B cell (primary cell): ENCODE measurements at regions of chr6 and their contacts with region 1.

Region 1: DNA sequence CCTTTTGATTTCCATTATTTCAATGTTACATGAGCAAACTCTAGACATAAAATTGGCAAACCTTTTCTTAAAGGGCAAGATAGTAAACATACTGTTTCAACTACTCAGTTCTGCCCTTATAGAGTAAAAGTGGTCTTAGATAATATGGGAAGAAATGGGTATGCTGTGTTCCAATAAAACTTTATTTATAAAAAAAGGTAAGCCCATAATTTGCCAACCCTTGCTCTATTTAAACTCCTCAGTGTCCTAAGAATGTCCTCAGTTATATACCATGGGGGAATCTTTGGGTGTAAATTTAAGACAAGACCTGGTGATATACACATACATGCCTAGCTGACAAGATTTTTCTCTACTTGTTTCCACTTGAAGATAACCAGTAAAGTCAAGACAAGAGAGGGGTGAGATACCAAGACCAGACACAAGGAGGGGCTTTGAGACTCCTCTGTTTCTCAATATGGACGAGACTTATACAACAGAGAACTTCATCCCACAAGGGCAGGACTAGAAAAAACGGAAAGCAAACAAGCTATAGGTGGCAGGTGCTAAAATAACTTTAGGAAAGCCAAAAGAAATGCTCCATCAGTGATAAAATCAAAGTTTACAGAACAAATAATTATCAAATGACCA is 10.5 kb downstream of the SNX3 start:
- DNase-seq: peak; percentile 46
- ATAC-seq: peak; percentile 36
- H3K4me3 ChIP-seq: no peak overlapping the region
- H3K4me3 Mint-ChIP-seq: peak overlapping the region; percentile 12
- H3K27ac ChIP-seq: no peak overlapping the region
- H3K27ac Mint-ChIP-seq: no peak overlapping the region
- H3K4me1 ChIP-seq: peaks cover 40 to 53% of the 10 kb centered on the region in 2 donors
- H3K4me1 Mint-ChIP-seq: peaks cover 77% of the 10 kb centered on the region
- H3K27me3 ChIP-seq: no peaks in the 10 kb centered on the region
- H3K27me3 Mint-ChIP-seq: no peaks in the 10 kb centered on the region
- CTCF ChIP-seq: peak; percentile 55

Region 2: DNA sequence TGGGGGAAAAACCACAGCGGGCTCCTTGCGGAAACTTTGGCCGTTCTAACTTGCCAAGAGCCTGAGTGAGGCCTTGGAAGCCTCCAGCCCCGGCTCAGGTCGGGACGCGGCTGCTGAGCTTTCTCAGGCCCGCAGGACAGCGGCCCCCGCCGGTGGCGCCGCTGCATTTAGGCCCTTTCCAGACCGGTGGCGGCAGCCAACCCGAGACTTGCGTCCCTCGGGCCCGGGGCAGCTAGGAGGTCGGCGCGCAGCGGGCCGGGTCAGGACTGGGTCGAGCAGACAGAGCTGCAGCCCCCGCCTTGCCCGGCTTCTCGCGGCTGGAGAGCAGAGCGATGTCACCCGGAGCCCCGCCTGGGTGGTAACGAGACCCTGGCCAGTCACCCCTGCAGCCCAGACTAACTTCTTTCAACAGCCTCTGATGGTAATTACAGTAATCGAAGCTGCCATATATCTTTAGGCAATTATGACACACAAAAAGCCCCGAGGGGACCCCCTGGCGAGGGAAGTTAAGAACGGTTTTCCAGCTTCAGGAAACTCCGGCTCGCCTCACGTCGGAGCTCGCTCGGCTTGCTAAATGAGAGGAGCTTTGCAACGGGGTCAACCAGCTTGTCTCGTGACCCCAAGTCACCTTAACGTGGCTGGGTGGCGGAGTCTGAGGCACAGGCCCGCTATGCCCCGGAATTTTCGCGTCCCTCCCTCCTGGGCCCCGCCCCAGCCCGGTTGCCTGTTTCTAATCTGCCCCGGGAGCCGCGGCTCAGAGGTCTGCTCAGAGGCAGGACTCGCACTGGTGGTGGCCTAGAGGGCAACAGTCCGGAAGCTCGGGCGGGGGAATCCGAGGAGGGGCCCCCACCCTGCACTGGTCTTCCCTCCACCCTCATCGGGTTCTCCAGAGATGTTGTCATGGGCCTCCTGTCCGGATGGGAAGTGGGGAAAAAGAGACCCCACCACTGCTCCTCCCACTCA is 81.6 kb before region 1 on chr6:
- CTCF ChIA-PET with region 1: no interaction called
- POLR2A ChIA-PET with region 1: no interaction called
- intact Hi-C with region 1: no loop called
- DNase-seq: peak; percentile 75
- ATAC-seq: peak; percentile 65
- H3K4me3 ChIP-seq: peak overlapping the region in 4 of 5 experiments; percentile 22 to 59 (median 40)
- H3K4me3 Mint-ChIP-seq: peak overlapping the region; percentile 79
- H3K27ac ChIP-seq: no peak overlapping the region
- H3K27ac Mint-ChIP-seq: no peak overlapping the region
- H3K4me1 ChIP-seq: peaks cover 70 to 80% of the 10 kb centered on the region in 2 donors
- H3K4me1 Mint-ChIP-seq: peaks cover 54% of the 10 kb centered on the region
- H3K27me3 ChIP-seq: peaks cover 3 to 95% (median 84%) of the 10 kb centered on the region in 4 experiments
- H3K27me3 Mint-ChIP-seq: peaks cover 70% of the 10 kb centered on the region
- CTCF ChIP-seq: peak; percentile 23

Region 3: DNA sequence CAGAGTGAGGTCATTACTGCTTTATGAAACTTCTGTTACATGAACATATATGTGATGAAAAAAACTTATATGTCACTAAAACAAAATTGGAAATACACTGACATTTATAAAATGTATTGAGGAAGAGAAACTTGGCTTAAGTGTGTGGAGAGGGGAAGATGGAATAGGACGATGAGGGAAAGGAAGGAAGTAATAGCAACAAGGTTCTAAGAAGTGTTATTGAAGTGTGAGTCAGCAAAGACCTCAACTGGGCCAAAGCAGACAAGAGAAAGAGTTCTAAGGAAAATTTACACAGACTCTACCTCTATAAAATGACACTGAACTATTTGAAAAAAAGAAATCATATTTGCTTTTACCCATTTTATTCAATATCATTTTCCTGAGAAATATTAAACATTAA is 27.8 kb before region 1 on chr6:
- CTCF ChIA-PET with region 1: no interaction called
- POLR2A ChIA-PET with region 1: no interaction called
- intact Hi-C with region 1: loop called (anchors 5 kb)
- DNase-seq: no peak
- ATAC-seq: no peak
- H3K4me3 ChIP-seq: no peak overlapping the region
- H3K4me3 Mint-ChIP-seq: no peak overlapping the region
- H3K27ac ChIP-seq: no peak overlapping the region
- H3K27ac Mint-ChIP-seq: peak overlapping the region; percentile 51
- H3K4me1 ChIP-seq: no peaks in the 10 kb centered on the region
- H3K4me1 Mint-ChIP-seq: peaks cover 4% of the 10 kb centered on the region
- H3K27me3 ChIP-seq: no peaks in the 10 kb centered on the region
- H3K27me3 Mint-ChIP-seq: no peaks in the 10 kb centered on the region
- CTCF ChIP-seq: no peak

Region 4: DNA sequence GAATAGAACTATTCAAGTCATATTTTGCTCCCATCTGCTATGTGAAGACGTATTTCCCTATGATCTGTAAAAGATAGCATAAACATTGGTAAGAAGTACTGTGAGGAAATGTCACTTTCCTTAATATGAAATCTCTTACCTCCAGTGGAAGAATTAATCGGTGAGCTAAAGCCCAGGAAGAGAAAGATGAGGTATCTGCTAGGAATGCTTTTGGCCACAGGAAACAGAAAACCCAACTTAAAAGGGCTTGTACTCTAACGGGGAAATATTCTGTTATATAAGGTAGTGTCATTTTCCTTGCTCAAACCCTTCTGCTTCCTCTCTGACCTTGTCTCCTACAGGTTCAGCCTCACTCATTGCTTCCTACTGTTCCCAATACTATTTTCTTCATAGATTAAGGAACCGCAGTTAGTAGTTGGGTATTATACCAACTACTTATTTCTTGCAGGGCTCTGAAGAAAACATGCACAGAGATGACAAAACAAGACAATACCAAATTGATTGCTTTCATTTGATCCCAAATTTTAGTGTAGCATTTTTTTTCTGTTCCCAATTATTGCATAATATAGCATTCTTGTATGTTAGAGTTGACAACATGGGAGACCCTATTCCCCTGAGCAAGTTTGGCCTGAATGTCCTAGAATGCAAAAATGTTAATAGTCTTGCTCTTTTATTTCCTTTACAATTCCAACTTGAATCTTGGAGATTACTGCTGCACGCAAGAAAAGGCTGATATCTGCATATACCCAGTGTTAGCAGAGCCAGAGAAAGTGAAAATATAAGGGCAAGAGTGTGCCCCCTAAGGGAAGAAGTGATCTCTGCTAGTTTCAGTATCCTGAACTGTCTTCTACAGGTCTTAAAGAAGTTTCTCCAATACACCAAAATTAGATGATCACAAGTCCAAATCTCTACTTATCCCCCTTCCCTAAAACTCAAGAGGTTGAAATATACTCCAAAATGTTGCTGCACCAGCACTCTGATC is 109.8 kb after region 1 on chr6:
- CTCF ChIA-PET with region 1: interaction called, 8 read pairs
- POLR2A ChIA-PET with region 1: no interaction called
- intact Hi-C with region 1: loop called (anchors 5 kb)
- DNase-seq: peak; percentile 42
- ATAC-seq: peak; percentile 31
- H3K4me3 ChIP-seq: no peak overlapping the region
- H3K4me3 Mint-ChIP-seq: no peak overlapping the region
- H3K27ac ChIP-seq: no peak overlapping the region
- H3K27ac Mint-ChIP-seq: no peak overlapping the region
- H3K4me1 ChIP-seq: no peaks in the 10 kb centered on the region
- H3K4me1 Mint-ChIP-seq: peaks cover 11% of the 10 kb centered on the region
- H3K27me3 ChIP-seq: no peaks in the 10 kb centered on the region
- H3K27me3 Mint-ChIP-seq: no peaks in the 10 kb centered on the region
- CTCF ChIP-seq: peak; percentile 40

Region 5: GRCh38 chr6:109009236-109009961 is 759.0 kb after region 1 on chr6:
- CTCF ChIA-PET with region 1: no interaction called
- POLR2A ChIA-PET with region 1: no interaction called
- intact Hi-C with region 1: loop called (anchors 5 kb)
- DNase-seq: peak; percentile 94
- ATAC-seq: peak; percentile 98
- H3K4me3 ChIP-seq: peak overlapping the region; percentile 77 to 97 (median 89)
- H3K4me3 Mint-ChIP-seq: peak overlapping the region; percentile 98
- H3K27ac ChIP-seq: peak overlapping the region; percentile 87 to 90
- H3K27ac Mint-ChIP-seq: peak overlapping the region; percentile 97
- H3K4me1 ChIP-seq: peaks cover 32 to 52% of the 10 kb centered on the region in 2 donors
- H3K4me1 Mint-ChIP-seq: peaks cover 64% of the 10 kb centered on the region
- H3K27me3 ChIP-seq: no peaks in the 10 kb centered on the region
- H3K27me3 Mint-ChIP-seq: no peaks in the 10 kb centered on the region
- CTCF ChIP-seq: no peak